Left ventricle myocardium superior (tissue), 1 donor: ENCODE measurements at regions of chr1 and their contacts with region 1.

Region 1: DNA sequence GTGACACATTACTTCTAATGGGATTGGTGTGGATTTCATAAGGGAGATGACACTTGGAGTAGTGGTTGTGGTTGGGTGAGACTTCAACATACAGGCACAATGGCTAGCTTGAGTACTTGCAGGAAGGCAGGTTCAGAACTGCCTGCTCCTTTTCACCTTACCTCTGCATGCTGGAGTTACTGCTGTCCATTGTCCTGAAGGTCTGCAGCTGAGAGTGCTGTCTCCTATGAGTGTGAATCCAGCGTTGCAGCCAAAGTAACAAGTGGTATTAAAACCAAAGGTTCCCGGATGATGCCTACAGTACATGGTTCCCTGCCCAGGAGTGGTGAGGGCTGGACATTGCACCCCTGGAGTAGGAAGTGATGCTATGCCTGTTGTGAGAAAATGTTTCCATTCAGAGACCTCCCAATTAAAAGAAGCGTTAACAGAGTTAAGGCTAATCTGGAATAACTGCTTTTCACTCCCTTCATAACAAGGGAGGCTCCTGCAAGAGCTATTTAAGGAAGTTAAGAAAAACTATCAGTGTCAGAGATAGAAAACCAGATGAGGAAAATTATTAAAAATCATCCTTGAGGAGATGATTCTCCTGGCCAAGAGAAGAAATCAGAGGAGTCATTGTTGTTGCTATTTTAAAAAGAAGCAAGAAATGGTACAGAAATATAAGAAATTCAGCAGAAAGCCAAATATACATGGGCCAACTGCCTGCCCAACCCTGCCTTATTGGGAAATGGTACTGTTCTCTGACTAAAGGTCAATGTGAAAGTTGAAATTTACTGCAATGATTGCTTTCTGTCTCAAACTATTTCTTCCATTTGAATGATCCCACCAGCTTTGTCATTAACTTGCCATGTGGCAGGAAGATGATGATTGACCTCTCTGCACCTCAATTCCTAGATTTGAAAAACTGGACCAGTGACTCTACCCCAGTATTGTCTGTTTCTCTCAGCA is 9.8 kb upstream of the F5 start:
- DNase-seq: no peak
- ATAC-seq: no peak

Region 2: DNA sequence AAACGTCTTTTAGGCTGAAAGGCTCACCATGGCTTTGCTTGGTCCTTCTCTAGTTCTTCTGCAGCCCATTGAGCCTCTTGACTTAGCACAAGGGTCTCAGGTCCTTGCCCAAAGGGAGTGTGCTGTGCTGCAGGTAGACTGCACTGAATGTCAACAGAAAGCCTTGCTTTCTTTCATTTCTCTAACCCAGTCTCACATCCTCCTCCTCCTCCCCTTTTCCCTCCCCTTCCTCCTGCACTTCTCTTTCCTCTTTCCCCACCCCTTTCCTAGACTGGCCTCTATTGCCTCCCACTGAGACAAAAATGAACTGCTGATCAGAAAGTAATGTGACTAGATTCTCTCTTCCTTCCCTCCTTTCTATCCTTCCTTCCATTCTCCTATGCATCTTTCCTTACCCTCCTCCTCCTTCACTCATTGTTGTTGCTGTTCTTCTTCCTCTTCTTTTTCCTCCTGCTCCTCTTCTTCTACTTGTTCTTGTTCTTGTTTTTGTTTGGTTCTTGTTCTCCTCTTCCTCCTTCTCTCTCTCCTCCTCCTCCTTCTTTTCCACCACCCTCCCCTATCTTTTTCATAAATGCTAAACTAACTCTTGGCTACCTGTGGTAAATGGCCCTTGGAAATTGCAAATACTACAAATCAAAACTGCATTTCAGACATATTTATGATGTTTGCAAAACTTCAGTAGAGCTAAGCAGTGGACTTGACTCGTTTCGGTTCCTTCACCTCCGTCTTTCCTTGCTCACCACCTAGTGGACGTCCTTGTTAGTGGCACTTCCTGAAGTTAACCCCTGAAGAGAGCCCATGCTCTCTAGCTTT is 115.6 kb after region 1 on chr1 and contains the start of gene SELL:
- intact Hi-C with region 1: loop called (anchors 5 kb)
- DNase-seq: no peak
- ATAC-seq: peak; percentile 95
- total RNA-seq, gene SELL: 2.1 TPM